H1 (cell line): ENCODE measurements at regions of chr15 and their contacts with region 1.

Region 1: GRCh38 chr15:98881526-98882520 is 125.8 kb downstream of the PGPEP1L start:
- DNase-seq: no peak
- H3K4me3 ChIP-seq: no peak overlapping the region
- H3K27ac ChIP-seq: no peak overlapping the region
- H3K4me1 ChIP-seq: peaks cover 0 to 7% (median 3%) of the 10 kb centered on the region in 4 experiments; a peak in 5 of 7 replicates
- H3K27me3 ChIP-seq: no peaks in the 10 kb centered on the region
- CTCF ChIP-seq: peak in 2 of 3 experiments; percentile 32 to 56; a peak in 2 of 4 replicates
- EP300 ChIP-seq: no peak
- POLR2A ChIP-seq: no peak
- RAD21 ChIP-seq: peak; percentile 54 to 60

Region 2: DNA sequence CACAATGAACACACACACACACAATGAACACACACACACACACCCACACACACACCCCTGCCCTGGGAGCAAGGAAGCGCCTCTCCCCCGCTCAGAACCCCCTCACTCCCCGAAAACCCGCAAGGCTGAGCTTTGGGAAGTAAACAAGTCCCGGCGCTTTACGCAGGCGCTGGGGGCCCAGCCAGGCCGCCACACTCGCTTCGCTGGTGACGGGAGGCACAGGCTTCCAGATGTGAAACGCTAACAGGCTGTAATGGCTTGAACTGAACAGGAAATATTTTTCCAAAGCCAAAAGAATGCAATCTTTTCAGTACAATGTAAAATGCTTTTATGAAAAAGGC is 356.2 kb before region 1 on chr15:
- CTCF ChIA-PET with region 1: interaction called, 16 read pairs
- POLR2A ChIA-PET with region 1: no interaction called
- DNase-seq: no peak
- H3K4me3 ChIP-seq: no peak overlapping the region
- H3K27ac ChIP-seq: no peak overlapping the region
- H3K4me1 ChIP-seq: peaks cover 0 to 13% (median 2%) of the 10 kb centered on the region in 4 experiments; a peak in 5 of 7 replicates
- H3K27me3 ChIP-seq: no peaks in the 10 kb centered on the region
- CTCF ChIP-seq: no peak
- EP300 ChIP-seq: no peak
- POLR2A ChIP-seq: no peak
- RAD21 ChIP-seq: no peak

Region 3: GRCh38 chr15:98805434-98806274 is 76.2 kb before region 1 on chr15:
- CTCF ChIA-PET with region 1: interaction called, 10 read pairs
- POLR2A ChIA-PET with region 1: no interaction called
- DNase-seq: no peak
- H3K4me3 ChIP-seq: no peak overlapping the region
- H3K27ac ChIP-seq: no peak overlapping the region
- H3K4me1 ChIP-seq: peaks cover 11 to 35% (median 21%) of the 10 kb centered on the region in 4 experiments
- H3K27me3 ChIP-seq: no peaks in the 10 kb centered on the region
- CTCF ChIP-seq: peak; percentile 13 to 30 (median 29); a peak in 3 of 4 replicates
- EP300 ChIP-seq: no peak
- POLR2A ChIP-seq: no peak
- RAD21 ChIP-seq: peak; percentile 22 to 36; a peak in 3 of 4 replicates

Region 4: GRCh38 chr15:98856218-98856907 is 25.5 kb before region 1 on chr15:
- CTCF ChIA-PET with region 1: interaction called, 46 read pairs
- POLR2A ChIA-PET with region 1: no interaction called
- DNase-seq: no peak
- H3K4me3 ChIP-seq: no peak overlapping the region
- H3K27ac ChIP-seq: no peak overlapping the region
- H3K4me1 ChIP-seq: peaks cover 19 to 34% (median 27%) of the 10 kb centered on the region in 4 experiments
- H3K27me3 ChIP-seq: no peaks in the 10 kb centered on the region
- CTCF ChIP-seq: no peak
- EP300 ChIP-seq: no peak
- POLR2A ChIP-seq: no peak
- RAD21 ChIP-seq: no peak

Region 5: DNA sequence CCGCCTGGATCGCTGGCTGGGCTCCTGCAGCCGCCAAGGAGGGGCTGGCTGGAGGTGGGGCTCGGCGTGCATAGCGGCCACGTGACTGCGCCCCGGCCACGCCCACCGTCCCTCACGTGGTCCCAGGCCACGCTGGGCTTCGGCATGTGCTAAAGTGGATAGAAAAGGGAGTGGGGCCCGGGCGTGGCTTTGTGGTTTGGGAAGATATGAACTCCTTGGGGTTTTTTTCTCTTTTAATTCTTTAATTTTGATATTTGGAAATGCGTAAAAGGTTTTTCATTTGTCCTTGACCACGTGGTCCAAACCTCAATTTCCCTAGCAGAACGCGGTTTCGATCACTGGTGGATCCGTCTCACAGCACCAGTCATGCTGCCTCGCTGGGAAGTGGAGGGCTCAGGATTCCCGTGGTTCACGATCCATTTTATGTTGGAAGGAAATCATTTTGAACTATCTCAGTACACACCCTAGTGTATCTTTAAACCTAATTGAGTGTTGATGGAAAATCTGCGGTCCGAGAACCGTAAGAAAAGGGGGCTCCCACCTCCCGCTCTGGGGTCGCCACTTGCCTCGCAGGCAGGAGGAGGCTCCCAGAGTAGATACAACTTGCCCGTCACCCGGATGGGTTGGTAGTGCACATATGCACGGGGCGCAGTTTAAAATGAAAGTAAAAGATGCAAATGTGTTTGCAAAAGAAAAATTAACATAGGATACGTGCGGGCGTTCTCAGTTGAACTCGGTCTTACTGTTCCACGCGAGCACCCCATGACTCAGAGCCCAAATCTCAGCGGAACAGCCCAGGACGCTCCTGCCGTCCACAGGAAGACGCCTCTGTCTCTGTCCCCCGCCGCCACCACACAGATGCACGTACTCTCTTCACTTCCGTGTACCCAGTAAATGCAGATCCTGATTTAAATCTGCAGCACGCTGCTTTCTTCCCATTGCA is 16.2 kb before region 1 on chr15:
- CTCF ChIA-PET with region 1: interaction called, 38 read pairs
- POLR2A ChIA-PET with region 1: interaction called, 3 read pairs
- DNase-seq: no peak
- H3K4me3 ChIP-seq: peak overlapping the region in 1 of 4 experiments; percentile 14; a peak in 1 of 8 replicates
- H3K27ac ChIP-seq: no peak overlapping the region
- H3K4me1 ChIP-seq: peaks cover 9 to 23% (median 19%) of the 10 kb centered on the region in 4 experiments
- H3K27me3 ChIP-seq: no peaks in the 10 kb centered on the region; a peak in 1 of 7 replicates
- CTCF ChIP-seq: no peak
- EP300 ChIP-seq: no peak
- POLR2A ChIP-seq: no peak
- RAD21 ChIP-seq: no peak

Region 6: DNA sequence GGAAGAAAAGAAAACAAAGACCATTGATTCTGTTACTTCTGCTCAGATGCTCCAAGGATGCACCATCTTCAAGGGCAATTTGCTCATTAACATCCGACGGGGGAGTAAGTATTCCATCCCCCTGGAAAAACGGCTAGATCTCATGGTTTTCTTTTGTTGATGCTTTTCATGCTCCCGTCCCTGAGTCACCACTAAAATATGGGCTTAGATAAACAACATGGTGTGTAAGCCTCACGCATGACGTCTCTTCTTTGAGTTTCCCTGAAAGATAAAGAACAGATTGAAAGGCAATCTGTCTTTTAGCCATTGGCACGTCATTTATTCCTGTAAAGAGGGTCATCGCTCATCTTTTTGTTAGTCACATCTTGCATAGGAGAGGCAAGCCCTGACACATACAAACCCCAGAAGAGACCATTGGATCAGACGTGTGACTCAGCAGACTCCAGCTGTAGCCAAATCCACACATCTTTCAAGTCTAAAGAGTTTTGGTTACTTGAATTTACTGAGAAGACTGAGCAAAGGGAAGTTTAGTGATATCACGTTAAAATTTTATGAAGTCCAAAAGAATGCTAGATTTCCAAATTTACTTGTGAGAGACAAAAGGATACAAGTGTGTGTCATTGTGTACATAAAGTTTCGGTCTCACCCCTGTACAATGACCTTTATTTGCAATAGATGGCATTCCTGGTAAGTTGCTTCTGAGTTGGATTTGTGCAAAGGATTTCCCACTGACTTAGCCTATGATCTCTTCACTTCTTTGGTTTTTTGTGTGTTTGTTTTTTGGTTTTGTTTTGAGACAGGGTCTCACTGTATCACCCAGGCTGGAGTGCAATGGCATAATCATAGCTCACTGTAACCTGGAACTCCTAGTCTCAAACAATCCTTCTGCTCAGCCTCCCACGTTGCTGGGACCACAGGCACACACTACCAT is 15.2 kb after region 1 on chr15:
- CTCF ChIA-PET with region 1: interaction called, 54 read pairs
- POLR2A ChIA-PET with region 1: no interaction called
- DNase-seq: no peak
- H3K4me3 ChIP-seq: no peak overlapping the region
- H3K27ac ChIP-seq: no peak overlapping the region
- H3K4me1 ChIP-seq: peaks cover 6 to 19% (median 10%) of the 10 kb centered on the region in 4 experiments; a peak in 6 of 7 replicates
- H3K27me3 ChIP-seq: no peaks in the 10 kb centered on the region
- CTCF ChIP-seq: no peak
- EP300 ChIP-seq: no peak
- POLR2A ChIP-seq: no peak
- RAD21 ChIP-seq: no peak

Region 7: GRCh38 chr15:98904544-98904943 is 22.7 kb after region 1 on chr15:
- CTCF ChIA-PET with region 1: interaction called, 54 read pairs
- POLR2A ChIA-PET with region 1: interaction called, 3 read pairs
- DNase-seq: no peak
- H3K4me3 ChIP-seq: no peak overlapping the region
- H3K27ac ChIP-seq: no peak overlapping the region
- H3K4me1 ChIP-seq: peaks cover 6 to 16% (median 14%) of the 10 kb centered on the region in 4 experiments
- H3K27me3 ChIP-seq: no peaks in the 10 kb centered on the region
- CTCF ChIP-seq: peak; percentile 63 to 81 (median 74)
- EP300 ChIP-seq: no peak
- POLR2A ChIP-seq: no peak
- RAD21 ChIP-seq: peak; percentile 85 to 89